Sciatic nerve (tissue), 2 donors: ENCODE measurements at regions of chr19 and their contacts with region 1.

Region 1: GRCh38 chr19:17275461-17276175 is 6.1 kb upstream of the ANKLE1 start:
- DNase-seq: no peak
- ATAC-seq: no peak

Region 2: DNA sequence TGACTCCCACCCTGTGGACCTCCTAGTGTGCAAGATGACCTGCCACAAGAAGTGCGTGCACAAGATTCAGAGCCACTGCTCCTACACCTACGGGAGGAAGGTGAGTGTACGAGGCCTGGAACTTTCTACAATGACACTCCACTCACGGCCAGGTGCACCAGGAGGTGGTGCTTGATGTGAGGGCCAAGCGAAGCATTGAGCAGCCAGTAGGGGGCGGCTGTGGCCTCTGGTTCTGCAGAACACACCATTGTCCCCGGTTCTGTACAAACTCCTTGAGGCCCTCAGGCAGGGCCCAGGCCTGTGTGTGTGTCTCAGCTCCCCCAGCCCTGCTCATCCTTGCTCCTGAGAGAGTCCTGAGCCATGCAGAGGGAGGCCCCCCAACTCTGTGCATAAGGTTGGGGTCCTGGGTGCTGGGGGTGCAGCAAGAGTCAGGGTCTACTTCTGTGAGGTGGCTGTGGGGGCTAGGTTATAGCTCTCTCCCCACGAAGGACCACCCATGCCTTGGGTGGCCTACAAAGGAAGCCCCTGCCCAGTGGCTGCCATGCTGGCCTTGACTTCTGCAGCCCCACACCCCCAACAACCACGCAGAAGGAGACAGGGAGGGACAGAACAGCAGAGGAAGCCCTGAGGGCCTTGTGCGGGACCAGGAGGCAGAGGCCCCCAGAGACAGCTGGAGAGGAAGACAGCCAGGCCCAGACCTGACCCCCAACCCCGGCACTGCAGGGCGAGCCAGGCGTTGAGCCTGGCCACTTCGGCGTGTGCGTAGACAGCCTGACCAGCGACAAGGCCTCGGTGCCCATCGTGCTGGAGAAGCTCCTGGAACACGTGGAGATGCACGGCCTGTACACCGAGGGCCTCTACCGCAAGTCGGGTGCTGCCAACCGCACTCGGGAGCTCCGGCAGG is 70.1 kb before region 1 on chr19:
- intact Hi-C with region 1: loop called (anchors 10 kb)
- DNase-seq: no peak
- ATAC-seq: peak; percentile 55

Region 3: DNA sequence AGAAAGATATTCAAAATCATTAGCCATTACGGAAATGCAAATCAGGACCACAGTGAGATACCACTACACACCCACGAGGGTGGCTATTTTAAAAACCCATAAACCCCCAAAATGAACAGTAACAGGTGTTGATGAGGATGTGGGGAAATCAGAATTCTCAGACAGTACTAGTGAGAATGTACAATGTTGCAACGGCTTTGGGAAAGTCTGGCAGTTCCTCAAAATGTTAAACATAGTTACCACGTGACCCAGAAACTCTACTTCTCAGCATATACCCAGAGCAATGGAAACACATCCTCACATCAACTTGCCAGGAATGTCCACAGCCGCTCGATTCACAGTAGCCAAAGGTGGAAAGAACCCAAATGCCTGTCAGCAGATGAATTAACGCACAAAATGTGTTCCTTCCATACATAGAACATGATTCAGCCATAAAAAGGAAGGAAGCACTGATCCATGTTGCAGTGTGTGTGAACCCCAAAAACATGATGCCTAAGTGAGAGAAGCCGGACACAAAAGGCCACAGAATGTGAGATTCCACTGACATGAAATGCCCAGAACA is 94.5 kb after region 1 on chr19:
- intact Hi-C with region 1: no loop called
- DNase-seq: no peak
- ATAC-seq: peak; percentile 62